AG04450 (cell line): ENCODE measurements at regions of chr1 and their contacts with region 1.

Region 1: DNA sequence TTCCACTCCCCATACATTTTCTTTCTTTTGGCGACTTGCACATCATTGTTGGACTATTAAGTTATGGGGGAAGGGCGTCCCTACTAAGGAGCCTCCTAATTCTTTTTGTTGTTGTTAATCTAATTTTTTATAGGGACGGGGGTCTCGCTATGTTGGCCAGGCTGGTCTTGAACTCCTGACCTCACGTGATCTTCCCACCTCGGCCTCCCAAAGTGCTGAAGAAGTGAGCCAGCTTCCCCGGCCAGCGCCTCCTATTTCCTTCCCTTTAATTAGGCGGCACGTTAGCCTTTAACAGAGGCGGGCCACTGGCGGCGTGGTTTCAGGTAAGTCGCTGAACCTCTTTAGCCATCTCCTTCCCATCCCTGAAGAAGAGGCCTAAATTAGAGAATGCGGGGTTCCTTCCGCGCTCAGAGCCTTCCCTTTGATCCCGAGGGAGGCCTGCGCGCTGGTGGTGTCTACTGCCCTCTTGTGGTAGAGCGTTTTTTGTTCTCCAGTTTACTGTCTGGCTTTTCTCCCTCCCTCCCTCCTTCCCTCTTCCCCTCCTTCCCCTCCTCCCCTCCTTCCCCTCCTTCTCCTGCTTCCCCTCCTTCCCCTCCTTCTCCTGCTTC is 38.1 kb downstream of the TNFRSF9 start:
- DNase-seq: peak; percentile 46
- H3K4me3 ChIP-seq: no peak overlapping the region
- H3K27ac ChIP-seq: no peak overlapping the region
- H3K27me3 ChIP-seq: no peaks in the 10 kb centered on the region
- CTCF ChIP-seq: peak; percentile 79

Region 2: DNA sequence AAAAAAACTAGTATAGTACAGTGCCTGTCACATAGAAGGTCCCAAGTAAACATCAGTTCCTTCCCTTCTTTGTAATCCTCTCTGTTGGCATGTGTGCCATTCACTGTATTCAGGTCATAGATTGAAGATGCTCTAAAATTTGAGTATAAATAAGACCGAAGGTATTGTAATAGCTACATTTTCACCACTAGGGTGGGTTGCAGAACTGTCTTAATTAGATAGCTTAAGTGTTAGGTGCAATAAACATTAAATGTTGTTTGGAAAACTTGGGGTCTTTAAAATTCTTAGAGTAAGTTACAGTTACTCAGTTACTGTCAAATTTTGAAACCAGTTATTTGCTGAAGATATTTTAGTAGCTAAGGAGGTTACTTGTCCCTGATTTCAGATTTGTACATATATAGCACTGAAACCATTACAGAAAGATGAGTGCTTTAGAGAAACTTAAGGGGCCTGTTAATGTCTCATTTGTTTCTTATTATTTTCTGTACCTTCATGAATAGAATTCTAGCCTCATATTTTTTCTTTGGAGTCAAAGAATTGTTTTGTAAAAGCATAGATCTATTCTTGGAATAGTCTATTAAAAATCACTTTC is 94.2 kb before region 1 on chr1:
- CTCF ChIA-PET with region 1: interaction called, 11 read pairs
- POLR2A ChIA-PET with region 1: no interaction called
- DNase-seq: no peak
- H3K4me3 ChIP-seq: no peak overlapping the region
- H3K27ac ChIP-seq: no peak overlapping the region
- H3K27me3 ChIP-seq: no peaks in the 10 kb centered on the region
- CTCF ChIP-seq: peak; percentile 60